Activated CD4-positive, alpha-beta T cell treated with anti-CD3 and anti-CD28 coated beads, Interleukin-2, amount 10 ng/mL, durations not matched to agents 24 days and 14 days (primary cell): ENCODE measurements at regions of chr12 and their contacts with region 1.

Region 1: GRCh38 chr12:55647027-55647426 is 10.3 kb downstream of the OR10P1 start:
- DNase-seq: no peak
- H3K4me3 Mint-ChIP-seq: no peak overlapping the region
- H3K27ac Mint-ChIP-seq: peak overlapping the region; percentile 6
- H3K4me1 Mint-ChIP-seq: peaks cover 24% of the 10 kb centered on the region
- H3K27me3 Mint-ChIP-seq: no peaks in the 10 kb centered on the region

Region 2: GRCh38 chr12:55629058-55629841 is 17.8 kb before region 1 on chr12:
- intact Hi-C with region 1: loop called (anchors 2 kb)
- DNase-seq: peak; percentile 61
- H3K4me3 Mint-ChIP-seq: peak overlapping the region; percentile 35
- H3K27ac Mint-ChIP-seq: peak overlapping the region; percentile 72
- H3K4me1 Mint-ChIP-seq: peaks cover 20% of the 10 kb centered on the region
- H3K27me3 Mint-ChIP-seq: peaks cover 4% of the 10 kb centered on the region

Region 3: GRCh38 chr12:55681142-55682077 is 34.4 kb after region 1 on chr12:
- intact Hi-C with region 1: no loop called
- DNase-seq: no peak
- H3K4me3 Mint-ChIP-seq: peak overlapping the region; percentile 9
- H3K27ac Mint-ChIP-seq: peak overlapping the region; percentile 42
- H3K4me1 Mint-ChIP-seq: peaks cover 11% of the 10 kb centered on the region
- H3K27me3 Mint-ChIP-seq: peaks cover 42% of the 10 kb centered on the region

Region 4: GRCh38 chr12:55715833-55716581 is 69.0 kb after region 1 on chr12 and contains the start of gene BLOC1S1:
- intact Hi-C with region 1: no loop called
- DNase-seq: peak; percentile 98
- H3K4me3 Mint-ChIP-seq: peak within 1 kb of the TSS; percentile 98
- H3K27ac Mint-ChIP-seq: peak within 1 kb of the TSS; percentile 98
- H3K4me1 Mint-ChIP-seq: peaks cover 27% of the 10 kb centered on the region
- H3K27me3 Mint-ChIP-seq: peaks cover 15% of the 10 kb centered on the region
- total RNA-seq, gene BLOC1S1: 62.7 and 64.8 TPM in 2 replicates